ENCODE measurements at regions of chr13 and their contacts with region 1.

Region 1: DNA sequence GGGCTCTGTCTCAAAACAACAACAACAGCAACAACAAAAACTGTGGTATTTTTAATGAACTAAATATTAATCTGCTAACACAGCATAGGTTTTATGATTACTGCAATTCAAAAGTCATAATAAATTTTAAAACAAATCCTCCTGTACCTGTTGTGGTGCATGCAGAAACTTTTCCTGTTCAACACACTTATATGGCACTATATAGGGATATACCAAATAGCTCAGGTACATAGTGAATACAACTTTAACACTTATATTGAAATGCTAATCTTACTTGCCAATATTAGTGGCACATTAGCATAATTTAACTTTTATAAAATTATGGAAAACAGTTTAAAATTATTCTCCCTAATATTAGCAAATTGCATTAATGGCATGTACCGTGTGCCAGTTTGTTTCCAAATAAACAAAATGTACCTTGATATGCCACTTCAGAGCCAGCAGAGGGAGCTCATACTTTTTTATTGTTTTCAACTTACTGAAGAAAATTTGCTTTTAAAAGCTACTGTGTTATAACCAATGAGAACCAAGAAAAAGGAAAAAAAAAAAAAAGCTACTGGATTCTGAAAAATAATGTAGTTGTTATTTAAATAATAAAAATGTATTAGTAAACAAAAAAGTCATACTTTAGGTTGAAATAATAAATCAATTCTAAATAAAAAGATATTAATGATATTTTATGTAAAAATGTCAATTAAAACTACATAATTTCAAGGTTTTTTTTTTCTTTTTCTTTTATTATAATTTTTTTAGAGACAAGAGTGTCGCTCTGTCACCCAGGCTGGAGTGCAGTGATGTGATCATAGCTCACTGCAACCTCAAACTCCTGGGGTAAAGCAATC is 18.0 kb upstream of the RBM26 start:
- DNase-seq: peak in 5 of 9 donors; percentile 33 to 53 (median 37)
- ATAC-seq: peak; percentile 76
- H3K4me3 ChIP-seq: no peak overlapping the region
- H3K4me3 Mint-ChIP-seq: no peak overlapping the region
- H3K27ac ChIP-seq: no peak overlapping the region
- H3K27ac Mint-ChIP-seq: no peak overlapping the region
- H3K4me1 ChIP-seq: no peaks in the 10 kb centered on the region
- H3K4me1 Mint-ChIP-seq: peaks cover 0 to 16% (median 0%) of the 10 kb centered on the region in 7 donors
- H3K27me3 ChIP-seq: no peaks in the 10 kb centered on the region
- H3K27me3 Mint-ChIP-seq: no peaks in the 10 kb centered on the region

Region 2: GRCh38 chr13:78137404-78138142 is 1286.4 kb before region 1 on chr13:
- CTCF ChIA-PET with region 1: interaction called, 9 read pairs
- POLR2A ChIA-PET with region 1: no interaction called
- intact Hi-C with region 1: loop called in 1 of 2 experiments (anchors 1 kb)
- DNase-seq: peak in 7 of 9 donors; percentile 7 to 41 (median 28)
- ATAC-seq: peak; percentile 76
- H3K4me3 ChIP-seq: no peak overlapping the region
- H3K4me3 Mint-ChIP-seq: peak overlapping the region in 9 of 10 donors; percentile 11 to 67 (median 42)
- H3K27ac ChIP-seq: no peak overlapping the region
- H3K27ac Mint-ChIP-seq: no peak overlapping the region
- H3K4me1 ChIP-seq: no peaks in the 10 kb centered on the region
- H3K4me1 Mint-ChIP-seq: peaks cover 3 to 7% (median 6%) of the 10 kb centered on the region in 7 donors
- H3K27me3 ChIP-seq: no peaks in the 10 kb centered on the region
- H3K27me3 Mint-ChIP-seq: peaks cover 0 to 4% (median 0%) of the 10 kb centered on the region in 5 donors

Region 3: GRCh38 chr13:79034341-79034740 is 389.7 kb before region 1 on chr13:
- CTCF ChIA-PET with region 1: no interaction called
- POLR2A ChIA-PET with region 1: no interaction called
- intact Hi-C with region 1: no loop called
- DNase-seq: no peak
- ATAC-seq: no peak
- H3K4me3 ChIP-seq: no peak overlapping the region
- H3K4me3 Mint-ChIP-seq: no peak overlapping the region
- H3K27ac ChIP-seq: no peak overlapping the region
- H3K27ac Mint-ChIP-seq: no peak overlapping the region
- H3K4me1 ChIP-seq: no peaks in the 10 kb centered on the region
- H3K4me1 Mint-ChIP-seq: no peaks in the 10 kb centered on the region
- H3K27me3 ChIP-seq: no peaks in the 10 kb centered on the region
- H3K27me3 Mint-ChIP-seq: peaks cover 0 to 15% (median 10%) of the 10 kb centered on the region in 5 donors

Region 4: DNA sequence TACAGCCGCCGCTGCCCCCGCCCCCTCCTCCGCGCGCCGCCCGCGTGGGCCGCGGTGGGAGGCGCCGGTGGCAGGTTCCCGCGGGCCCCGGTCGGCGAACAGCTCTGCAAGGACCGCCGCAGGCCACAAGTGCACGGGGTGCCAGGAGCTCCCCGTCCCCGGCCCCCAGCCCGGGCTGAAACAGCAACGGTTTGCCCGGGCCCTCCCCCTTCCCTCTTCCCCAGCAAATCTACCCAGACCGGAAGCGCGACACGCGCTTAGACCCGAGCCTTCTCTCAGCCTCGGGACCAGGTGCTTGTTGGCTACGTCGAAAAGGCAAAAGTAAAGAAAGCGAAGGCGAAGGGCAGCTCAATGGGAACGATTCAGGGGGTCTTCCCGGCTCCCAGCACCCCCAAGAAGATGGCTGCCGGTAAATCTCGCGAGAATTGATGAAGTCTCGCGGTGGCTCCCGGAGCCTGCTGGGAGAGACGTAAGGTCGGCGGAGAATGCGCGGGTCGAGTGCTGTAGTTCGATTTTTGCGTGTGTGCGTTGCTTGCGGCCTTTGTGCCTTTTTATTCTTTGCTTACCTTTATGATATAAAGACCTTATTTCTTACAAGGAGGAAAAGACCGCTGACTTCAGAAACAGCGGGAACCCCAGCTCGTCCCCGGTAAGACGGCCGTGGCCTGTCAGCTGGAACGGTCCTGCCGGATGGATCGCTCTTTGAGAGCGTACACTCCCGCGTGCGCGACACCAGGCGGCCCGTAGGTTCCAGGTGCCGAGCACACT is 18.0 kb before region 1 on chr13 and contains the start of gene RBM26:
- CTCF ChIA-PET with region 1: interaction called, 18 read pairs
- POLR2A ChIA-PET with region 1: interaction called, 5 read pairs
- intact Hi-C with region 1: no loop called
- DNase-seq: peak; percentile 87 to 96 (median 93)
- ATAC-seq: peak; percentile 92
- H3K4me3 ChIP-seq: peak within 1 kb of the TSS; percentile 93
- H3K4me3 Mint-ChIP-seq: peak within 1 kb of the TSS in 5 of 10 donors; percentile 93 to 97 (median 95)
- H3K27ac ChIP-seq: peak within 1 kb of the TSS; percentile 91
- H3K27ac Mint-ChIP-seq: peak within 1 kb of the TSS in 5 of 9 donors; percentile 97 to 99 (median 99)
- H3K4me1 ChIP-seq: peaks cover 33 to 44% of the 10 kb centered on the region in 2 donors
- H3K4me1 Mint-ChIP-seq: peaks cover 31 to 49% (median 36%) of the 10 kb centered on the region in 7 donors
- H3K27me3 ChIP-seq: no peaks in the 10 kb centered on the region
- H3K27me3 Mint-ChIP-seq: no peaks in the 10 kb centered on the region
- total RNA-seq, gene RBM26: 75.4 to 136 (median 85.2) TPM

Region 5: DNA sequence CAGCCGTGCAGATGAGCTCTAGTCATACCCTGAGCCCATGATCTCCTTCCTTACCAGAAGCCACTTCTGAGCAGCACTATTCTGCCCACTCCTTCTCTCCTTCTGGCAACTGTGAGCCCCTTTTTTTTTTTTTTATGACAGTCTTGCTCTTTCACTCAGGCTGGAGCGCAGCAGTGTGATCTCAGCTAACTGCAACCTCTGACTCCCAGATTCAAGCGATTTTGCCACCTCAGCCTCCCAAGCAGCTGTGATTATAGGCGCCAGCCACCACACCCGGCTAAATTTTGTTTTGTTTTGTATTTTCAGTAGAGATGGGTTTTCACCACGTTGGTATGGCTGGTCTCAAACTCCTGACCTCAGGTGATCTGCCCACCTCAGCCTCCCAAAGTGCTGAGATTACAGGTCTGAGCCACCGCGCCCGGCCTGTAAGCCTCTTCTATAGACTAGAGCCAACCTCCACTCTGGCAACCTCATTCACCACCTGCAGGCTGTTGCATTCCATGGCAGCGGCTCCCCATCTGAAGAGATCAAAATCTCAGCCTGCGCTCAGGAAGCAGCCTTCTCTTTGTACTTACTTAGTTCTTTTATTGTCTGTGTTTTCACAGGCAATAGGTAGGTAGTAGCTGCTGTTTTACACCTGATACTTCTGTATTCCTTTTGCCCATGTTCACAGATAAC is 22.1 kb after region 1 on chr13:
- CTCF ChIA-PET with region 1: interaction called, 4 read pairs
- POLR2A ChIA-PET with region 1: no interaction called
- intact Hi-C with region 1: loop called (anchors 2 kb)
- DNase-seq: peak in 5 of 9 donors; percentile 5 to 29 (median 17)
- ATAC-seq: peak; percentile 80
- H3K4me3 ChIP-seq: no peak overlapping the region
- H3K4me3 Mint-ChIP-seq: peak overlapping the region in 1 of 10 donors; percentile 20
- H3K27ac ChIP-seq: no peak overlapping the region
- H3K27ac Mint-ChIP-seq: peak overlapping the region in 5 of 9 donors; percentile 6 to 37 (median 28)
- H3K4me1 ChIP-seq: peaks cover 8 to 18% of the 10 kb centered on the region in 2 donors
- H3K4me1 Mint-ChIP-seq: peaks cover 24 to 46% (median 40%) of the 10 kb centered on the region in 7 donors
- H3K27me3 ChIP-seq: no peaks in the 10 kb centered on the region
- H3K27me3 Mint-ChIP-seq: no peaks in the 10 kb centered on the region

Region 6: DNA sequence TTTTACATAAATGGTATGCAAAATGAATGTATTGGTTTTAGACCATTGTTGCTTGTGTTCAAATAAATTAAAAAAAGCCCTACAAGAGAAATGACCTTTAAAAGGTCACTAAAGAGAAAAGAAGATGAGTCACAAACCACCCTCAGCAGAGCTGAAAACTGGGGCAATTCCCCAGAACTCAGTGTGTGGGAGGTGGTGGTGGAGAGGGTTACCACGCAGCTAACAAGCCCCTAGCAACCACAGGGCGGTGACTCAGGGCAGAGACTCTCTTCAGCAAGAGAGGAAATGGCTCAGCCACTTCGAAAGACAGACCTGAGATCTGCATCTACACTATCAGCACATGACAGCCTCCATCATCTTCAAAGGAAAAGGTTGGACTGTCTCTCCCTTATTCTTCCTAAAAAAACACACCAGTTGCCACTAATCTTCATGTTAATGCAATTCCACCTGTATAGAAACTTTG is 27.5 kb after region 1 on chr13:
- CTCF ChIA-PET with region 1: interaction called, 3 read pairs
- POLR2A ChIA-PET with region 1: no interaction called
- intact Hi-C with region 1: loop called (anchors 2 kb)
- DNase-seq: peak; percentile 17 to 90 (median 51)
- ATAC-seq: peak; percentile 99
- H3K4me3 ChIP-seq: no peak overlapping the region
- H3K4me3 Mint-ChIP-seq: peak overlapping the region in 8 of 10 donors; percentile 10 to 84 (median 32)
- H3K27ac ChIP-seq: no peak overlapping the region
- H3K27ac Mint-ChIP-seq: peak overlapping the region; percentile 1 to 92 (median 43)
- H3K4me1 ChIP-seq: peaks cover 19 to 28% of the 10 kb centered on the region in 2 donors
- H3K4me1 Mint-ChIP-seq: peaks cover 24 to 64% (median 46%) of the 10 kb centered on the region in 7 donors
- H3K27me3 ChIP-seq: no peaks in the 10 kb centered on the region
- H3K27me3 Mint-ChIP-seq: no peaks in the 10 kb centered on the region

Region 7: DNA sequence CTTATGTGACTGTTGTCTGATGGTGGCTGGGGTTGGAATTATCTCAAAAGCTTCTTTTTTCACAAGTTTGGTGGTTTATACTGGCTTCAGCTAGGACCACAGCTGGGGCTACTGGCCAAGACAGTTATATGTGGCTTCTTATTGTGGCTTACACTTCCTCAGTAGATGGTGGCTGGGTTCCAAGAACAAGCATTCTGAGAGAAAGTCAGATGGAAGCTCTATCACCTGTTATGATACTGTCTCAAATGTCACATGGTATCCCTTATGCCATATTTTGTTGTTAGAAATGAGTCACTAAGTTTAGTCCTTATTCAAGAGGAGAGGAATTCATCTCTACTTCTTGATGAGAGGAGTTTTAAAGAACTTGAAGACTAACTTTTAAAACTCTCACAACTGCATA is 98.6 kb after region 1 on chr13:
- CTCF ChIA-PET with region 1: interaction called, 9 read pairs
- POLR2A ChIA-PET with region 1: no interaction called
- intact Hi-C with region 1: loop called in 1 of 2 experiments (anchors 5 kb)
- DNase-seq: peak in 1 of 9 donors; percentile 40
- ATAC-seq: peak; percentile 74
- H3K4me3 ChIP-seq: no peak overlapping the region
- H3K4me3 Mint-ChIP-seq: peak overlapping the region in 1 of 10 donors; percentile 84
- H3K27ac ChIP-seq: no peak overlapping the region
- H3K27ac Mint-ChIP-seq: peak overlapping the region in 1 of 9 donors; percentile 91
- H3K4me1 ChIP-seq: peaks cover 0 to 7% of the 10 kb centered on the region in 2 donors
- H3K4me1 Mint-ChIP-seq: peaks cover 0 to 41% (median 13%) of the 10 kb centered on the region in 7 donors
- H3K27me3 ChIP-seq: no peaks in the 10 kb centered on the region
- H3K27me3 Mint-ChIP-seq: no peaks in the 10 kb centered on the region